ENCODE measurements at regions of chrX and their contacts with region 1.

Region 1: DNA sequence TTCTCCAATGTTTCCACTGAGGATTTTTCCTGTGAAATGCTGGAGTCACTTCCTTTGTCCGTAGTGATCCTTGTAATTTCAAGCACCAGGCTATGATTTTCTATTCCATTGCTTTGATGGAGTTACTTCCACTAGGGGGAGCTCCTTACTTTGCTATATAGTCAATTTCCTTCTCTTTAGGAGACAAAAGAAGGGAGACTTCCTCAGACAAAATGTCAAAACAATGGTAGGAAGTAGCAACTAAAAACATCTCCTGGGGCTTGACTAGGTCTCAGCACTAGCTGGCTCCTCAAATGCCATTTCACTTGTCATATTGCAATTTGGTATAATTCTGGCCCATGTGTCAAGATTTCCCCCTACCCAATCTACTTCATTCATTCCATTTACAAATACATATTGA is 24.1 kb downstream of the ZCCHC12 start:
- DNase-seq: no peak
- H3K4me3 Mint-ChIP-seq: no peak overlapping the region
- H3K27ac Mint-ChIP-seq: no peak overlapping the region
- H3K4me1 Mint-ChIP-seq: no peaks in the 10 kb centered on the region
- H3K27me3 Mint-ChIP-seq: no peaks in the 10 kb centered on the region

Region 2: GRCh38 chrX:119004920-119005524 is 157.3 kb after region 1 on chrX:
- intact Hi-C with region 1: loop called (anchors 1 kb)
- DNase-seq: peak; percentile 6
- H3K4me3 Mint-ChIP-seq: no peak overlapping the region
- H3K27ac Mint-ChIP-seq: no peak overlapping the region
- H3K4me1 Mint-ChIP-seq: no peaks in the 10 kb centered on the region
- H3K27me3 Mint-ChIP-seq: peaks cover 2% of the 10 kb centered on the region

Region 3: GRCh38 chrX:119067023-119067739 is 219.5 kb after region 1 on chrX:
- intact Hi-C with region 1: loop called (anchors 1 kb)
- DNase-seq: no peak
- H3K4me3 Mint-ChIP-seq: no peak overlapping the region
- H3K27ac Mint-ChIP-seq: no peak overlapping the region
- H3K4me1 Mint-ChIP-seq: no peaks in the 10 kb centered on the region
- H3K27me3 Mint-ChIP-seq: no peaks in the 10 kb centered on the region